H1 (cell line): ENCODE measurements at regions of chr14 and their contacts with region 1.

Region 1: GRCh38 chr14:25034803-25035681 is 14.9 kb downstream of the STXBP6 start:
- DNase-seq: no peak
- H3K4me3 ChIP-seq: no peak overlapping the region
- H3K27ac ChIP-seq: no peak overlapping the region
- H3K4me1 ChIP-seq: no peaks in the 10 kb centered on the region
- H3K27me3 ChIP-seq: no peaks in the 10 kb centered on the region
- CTCF ChIP-seq: no peak
- EP300 ChIP-seq: no peak
- POLR2A ChIP-seq: no peak
- RAD21 ChIP-seq: no peak

Region 2: DNA sequence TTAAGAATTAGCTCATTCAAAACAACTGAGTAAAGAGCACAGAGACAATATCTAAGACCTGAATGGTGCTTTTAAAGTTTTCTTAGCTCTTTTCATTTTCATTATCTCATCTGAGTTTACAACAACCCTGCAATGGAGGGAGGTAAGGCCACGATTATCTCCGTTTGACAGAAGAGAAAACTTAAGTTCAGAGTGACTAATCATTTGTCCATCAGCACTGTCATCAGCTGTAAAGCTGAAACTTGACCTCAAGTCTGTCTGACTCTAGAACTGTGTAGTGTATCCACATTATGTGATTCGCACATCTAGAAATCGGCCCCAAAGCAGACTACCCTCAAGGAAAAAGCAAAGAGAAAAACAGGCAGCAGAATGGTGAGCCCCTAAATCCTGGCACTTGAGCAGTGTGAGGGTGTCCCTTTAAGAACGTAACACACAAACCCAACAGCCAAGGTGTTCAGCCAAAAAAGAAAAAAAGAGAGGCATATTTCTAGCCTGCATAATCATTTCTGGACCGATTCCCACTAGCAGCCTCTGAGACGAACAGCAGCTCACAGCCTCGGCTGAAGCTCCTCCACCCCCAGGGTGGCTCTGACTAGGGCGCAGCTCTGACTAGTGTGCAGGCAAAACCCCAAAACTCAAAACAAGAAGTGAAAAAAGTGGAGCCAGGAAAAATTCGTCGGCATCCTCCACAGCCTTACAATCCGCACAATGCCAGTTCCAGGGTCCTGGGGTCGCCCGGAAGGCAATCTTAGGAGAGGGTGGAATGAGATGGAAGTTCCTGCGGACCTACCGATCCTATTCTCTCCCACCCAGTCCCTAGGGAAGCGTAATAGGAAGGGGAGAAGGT is 13.4 kb after region 1 on chr14:
- CTCF ChIA-PET with region 1: interaction called, 11 read pairs
- POLR2A ChIA-PET with region 1: no interaction called
- DNase-seq: no peak
- H3K4me3 ChIP-seq: peak overlapping the region; percentile 45 to 80 (median 64); a peak in 7 of 8 replicates
- H3K27ac ChIP-seq: no peak overlapping the region
- H3K4me1 ChIP-seq: peaks cover 2 to 13% (median 5%) of the 10 kb centered on the region in 4 experiments; a peak in 5 of 7 replicates
- H3K27me3 ChIP-seq: peaks cover 8 to 43% (median 32%) of the 10 kb centered on the region in 4 experiments
- CTCF ChIP-seq: no peak
- EP300 ChIP-seq: no peak
- POLR2A ChIP-seq: no peak
- RAD21 ChIP-seq: no peak